HCT116 (cell line): ENCODE measurements at regions of chr14 and their contacts with region 1.

Region 1: DNA sequence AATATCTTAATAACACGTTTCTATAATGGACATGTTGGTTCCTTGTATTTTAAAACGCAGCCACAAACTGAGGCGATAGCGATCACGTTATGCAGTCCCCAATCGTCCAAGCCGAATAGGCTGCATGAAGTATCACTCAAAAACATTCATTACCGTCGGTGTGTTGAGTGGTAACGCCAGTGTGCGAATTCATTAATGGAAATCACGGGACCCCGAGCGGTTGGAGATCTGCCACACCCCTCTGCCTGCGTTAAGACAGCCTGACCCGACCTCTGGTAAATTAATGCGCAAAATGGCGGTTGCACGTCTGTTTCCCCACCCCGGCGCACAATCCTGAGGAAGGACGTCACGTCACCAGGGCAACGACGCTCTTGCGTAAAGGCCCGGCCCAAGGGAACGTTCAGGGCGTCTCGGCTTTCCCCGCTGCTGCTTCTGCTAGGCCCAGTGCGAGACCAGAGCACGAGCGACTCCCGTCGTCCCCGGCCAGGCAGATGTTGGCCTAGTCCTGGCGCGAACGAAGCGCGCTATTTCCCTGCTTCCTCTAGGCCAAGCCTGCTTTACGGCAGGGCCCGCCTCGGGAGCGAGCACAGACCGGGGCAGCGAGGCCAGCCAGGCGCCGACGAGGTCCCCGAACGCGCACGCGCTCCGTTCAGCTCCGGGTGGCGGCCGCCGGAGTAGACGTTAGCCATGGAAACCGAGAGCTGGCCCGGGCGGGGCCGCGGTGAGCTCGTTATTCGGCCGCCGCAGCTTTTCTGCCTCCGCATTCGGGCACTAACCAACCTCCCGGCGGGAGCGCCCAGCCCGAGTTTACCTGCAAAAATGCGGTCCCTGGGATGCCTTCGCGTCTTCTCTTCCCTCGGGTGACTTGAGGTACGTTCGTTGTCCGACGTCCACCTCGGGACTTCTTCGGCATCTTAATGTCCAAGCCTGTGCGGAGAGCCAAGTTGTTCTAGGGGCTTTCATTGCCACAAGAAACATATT is at the start of gene PCNX4:
- DNase-seq: peak; percentile 98
- ATAC-seq: peak; percentile 94
- H3K4me3 ChIP-seq: peak within 1 kb of the TSS; percentile 67 to 75
- H3K27ac ChIP-seq: peak within 1 kb of the TSS; percentile 96
- H3K4me1 ChIP-seq: peaks cover 12 to 24% of the 10 kb centered on the region in 2 experiments
- H3K27me3 ChIP-seq: no peaks in the 10 kb centered on the region
- CTCF ChIP-seq: no peak
- POLR2A ChIP-seq: peak; percentile 92
- RAD21 ChIP-seq: no peak
- total RNA-seq, gene PCNX4: 48.4 TPM

Region 2: GRCh38 chr14:60164712-60165546 is 73.1 kb after region 1 on chr14 and contains the start of gene DHRS7:
- CTCF ChIA-PET with region 1: no interaction called
- POLR2A ChIA-PET with region 1: no interaction called
- RAD21 ChIA-PET with region 1: no interaction called
- intact Hi-C with region 1: loop called (anchors 2 kb)
- DNase-seq: peak; percentile 51
- ATAC-seq: peak; percentile 98
- H3K4me3 ChIP-seq: peak within 1 kb of the TSS; percentile 79 to 98
- H3K27ac ChIP-seq: peak within 1 kb of the TSS; percentile 91
- H3K4me1 ChIP-seq: peaks cover 16 to 27% of the 10 kb centered on the region in 2 experiments
- H3K27me3 ChIP-seq: no peaks in the 10 kb centered on the region
- CTCF ChIP-seq: peak; percentile 43 to 46 (median 45); a peak in 3 of 6 replicates
- POLR2A ChIP-seq: peak; percentile 42
- RAD21 ChIP-seq: peak; percentile 71
- total RNA-seq, gene DHRS7: 43.8 TPM

Region 3: DNA sequence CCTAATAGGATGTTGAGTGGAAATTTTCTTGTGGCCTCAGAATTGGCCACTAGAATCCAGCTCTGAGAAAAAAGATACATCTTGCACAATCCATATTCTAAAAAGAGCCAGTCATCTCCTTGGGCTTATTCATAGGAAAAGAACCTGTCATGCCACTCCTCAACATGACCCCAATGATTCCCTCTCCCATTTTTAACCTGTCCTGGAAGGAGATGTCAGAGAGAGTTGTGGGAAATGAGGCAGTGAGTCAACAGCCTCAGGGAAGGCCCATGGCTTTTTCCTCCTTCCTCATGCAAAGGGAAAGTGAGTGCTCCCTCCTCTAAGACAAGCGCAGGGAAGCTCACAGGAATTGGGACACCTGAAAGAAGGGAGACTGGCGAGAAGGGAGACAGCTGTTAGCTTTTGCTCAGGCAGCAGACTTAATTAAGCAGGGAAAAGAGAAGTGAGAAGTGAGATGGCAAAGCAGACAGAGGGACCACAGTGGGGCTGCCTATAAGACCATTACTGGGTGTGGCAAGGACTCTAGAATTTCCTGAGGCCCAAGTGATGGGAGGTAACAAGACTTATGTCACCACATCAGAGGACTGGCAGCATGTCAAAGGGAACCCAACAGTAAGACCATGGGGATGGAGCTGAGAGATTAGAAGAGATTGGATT is 83.5 kb after region 1 on chr14:
- CTCF ChIA-PET with region 1: no interaction called
- POLR2A ChIA-PET with region 1: no interaction called
- RAD21 ChIA-PET with region 1: no interaction called
- intact Hi-C with region 1: no loop called
- DNase-seq: no peak
- ATAC-seq: no peak
- H3K4me3 ChIP-seq: no peak overlapping the region
- H3K27ac ChIP-seq: no peak overlapping the region
- H3K4me1 ChIP-seq: peaks cover 0 to 18% of the 10 kb centered on the region in 2 experiments; a peak in 2 of 4 replicates
- H3K27me3 ChIP-seq: no peaks in the 10 kb centered on the region
- CTCF ChIP-seq: no peak
- POLR2A ChIP-seq: no peak
- RAD21 ChIP-seq: no peak

Region 4: DNA sequence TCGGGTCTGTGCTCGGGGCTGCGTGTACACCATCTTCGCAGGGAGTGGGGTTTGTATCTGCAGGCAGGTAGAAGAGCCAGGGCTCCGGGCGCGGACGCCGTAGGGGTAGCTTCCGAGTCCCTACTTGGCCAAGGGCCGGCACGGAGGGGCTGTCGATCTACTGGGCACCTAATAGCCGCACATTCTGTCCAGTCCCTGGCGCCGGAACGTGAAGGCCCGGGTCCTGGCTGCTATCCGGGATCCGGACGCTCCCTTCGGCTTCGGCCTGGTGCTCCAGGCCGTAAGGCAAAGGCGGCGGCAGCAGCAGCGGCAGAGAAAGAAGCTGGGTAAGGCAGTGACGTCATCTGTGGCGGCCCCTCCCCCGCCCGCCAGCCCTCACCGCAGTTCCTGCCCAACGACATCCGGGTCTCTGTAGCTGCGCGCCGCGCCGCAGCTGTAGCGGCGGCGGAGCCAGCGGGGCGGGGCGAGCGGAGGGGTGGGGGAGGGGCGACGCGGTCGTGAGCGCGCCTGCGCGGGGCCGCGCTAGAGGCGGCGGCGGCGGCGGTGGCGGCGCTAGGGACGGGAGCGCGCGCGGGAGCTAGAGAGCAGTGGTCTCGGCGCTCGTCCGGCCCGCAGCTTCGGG is 157.0 kb after region 1 on chr14 and contains the start of gene PPM1A:
- CTCF ChIA-PET with region 1: no interaction called
- POLR2A ChIA-PET with region 1: no interaction called
- RAD21 ChIA-PET with region 1: no interaction called
- intact Hi-C with region 1: loop called (anchors 1 kb)
- DNase-seq: peak; percentile 84
- ATAC-seq: peak; percentile 75
- H3K4me3 ChIP-seq: peak within 1 kb of the TSS; percentile 74 to 77
- H3K27ac ChIP-seq: peak within 1 kb of the TSS; percentile 92
- H3K4me1 ChIP-seq: peaks cover 9 to 31% of the 10 kb centered on the region in 2 experiments
- H3K27me3 ChIP-seq: no peaks in the 10 kb centered on the region
- CTCF ChIP-seq: no peak
- POLR2A ChIP-seq: peak; percentile 82
- RAD21 ChIP-seq: no peak
- total RNA-seq, gene PPM1A: 32.8 TPM